ENCODE measurements at regions of chr1 and their contacts with region 1.

Region 1: DNA sequence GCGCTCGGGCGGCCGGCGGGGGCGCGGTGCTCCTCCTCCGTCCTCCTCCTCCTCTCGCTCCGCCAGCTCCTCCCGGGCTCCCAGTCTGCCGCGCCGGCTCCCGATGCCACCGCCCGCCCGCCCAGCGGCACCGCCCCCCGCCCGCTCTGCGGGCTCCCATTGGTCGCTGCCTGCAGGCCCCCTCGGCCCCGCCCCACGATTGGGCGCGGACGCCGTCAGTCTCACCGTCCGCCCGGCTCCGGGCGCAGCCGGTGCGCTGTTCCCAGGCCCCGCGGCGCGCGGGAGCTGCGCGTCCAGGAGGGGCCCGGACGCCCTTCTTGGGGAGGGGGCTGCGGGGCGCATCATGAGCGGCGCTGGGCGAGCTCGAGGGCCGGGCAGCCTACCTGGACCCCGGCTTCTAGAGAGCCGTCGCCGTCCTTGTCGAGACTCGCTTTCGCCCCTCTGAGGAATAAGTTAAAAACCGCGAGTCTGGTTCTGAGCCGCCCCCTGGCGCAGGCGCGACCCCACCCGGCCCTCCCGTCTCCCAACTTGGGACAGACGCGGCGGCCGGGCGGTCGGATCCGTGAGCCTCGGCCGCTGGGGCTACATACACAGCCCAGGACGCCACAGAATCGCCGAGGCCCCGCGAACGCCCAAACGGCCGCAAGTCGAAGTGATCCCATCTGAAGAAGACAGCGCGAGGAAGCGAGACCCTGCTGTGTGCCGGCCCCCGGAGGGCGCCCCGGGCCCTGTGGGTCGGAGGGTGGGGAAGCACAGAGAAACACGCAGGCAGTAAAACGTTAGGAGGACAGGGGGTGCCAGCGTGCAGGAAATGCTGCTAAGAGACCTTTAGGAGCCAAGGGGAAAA is at the start of gene SIPA1L2:
- DNase-seq: peak; percentile 87 to 95
- H3K4me3 ChIP-seq: peak within 1 kb of the TSS; percentile 68 to 89
- H3K27ac ChIP-seq: peak within 1 kb of the TSS; percentile 82 to 94
- H3K4me1 ChIP-seq: no peaks in the 10 kb centered on the region
- H3K27me3 ChIP-seq: no peaks in the 10 kb centered on the region
- CTCF ChIP-seq: peak; percentile 26 to 51 (median 44)
- POLR2A ChIP-seq: peak; percentile 63 to 76
- total RNA-seq, gene SIPA1L2: 2.4 to 25.1 (median 7.0) TPM

Region 2: DNA sequence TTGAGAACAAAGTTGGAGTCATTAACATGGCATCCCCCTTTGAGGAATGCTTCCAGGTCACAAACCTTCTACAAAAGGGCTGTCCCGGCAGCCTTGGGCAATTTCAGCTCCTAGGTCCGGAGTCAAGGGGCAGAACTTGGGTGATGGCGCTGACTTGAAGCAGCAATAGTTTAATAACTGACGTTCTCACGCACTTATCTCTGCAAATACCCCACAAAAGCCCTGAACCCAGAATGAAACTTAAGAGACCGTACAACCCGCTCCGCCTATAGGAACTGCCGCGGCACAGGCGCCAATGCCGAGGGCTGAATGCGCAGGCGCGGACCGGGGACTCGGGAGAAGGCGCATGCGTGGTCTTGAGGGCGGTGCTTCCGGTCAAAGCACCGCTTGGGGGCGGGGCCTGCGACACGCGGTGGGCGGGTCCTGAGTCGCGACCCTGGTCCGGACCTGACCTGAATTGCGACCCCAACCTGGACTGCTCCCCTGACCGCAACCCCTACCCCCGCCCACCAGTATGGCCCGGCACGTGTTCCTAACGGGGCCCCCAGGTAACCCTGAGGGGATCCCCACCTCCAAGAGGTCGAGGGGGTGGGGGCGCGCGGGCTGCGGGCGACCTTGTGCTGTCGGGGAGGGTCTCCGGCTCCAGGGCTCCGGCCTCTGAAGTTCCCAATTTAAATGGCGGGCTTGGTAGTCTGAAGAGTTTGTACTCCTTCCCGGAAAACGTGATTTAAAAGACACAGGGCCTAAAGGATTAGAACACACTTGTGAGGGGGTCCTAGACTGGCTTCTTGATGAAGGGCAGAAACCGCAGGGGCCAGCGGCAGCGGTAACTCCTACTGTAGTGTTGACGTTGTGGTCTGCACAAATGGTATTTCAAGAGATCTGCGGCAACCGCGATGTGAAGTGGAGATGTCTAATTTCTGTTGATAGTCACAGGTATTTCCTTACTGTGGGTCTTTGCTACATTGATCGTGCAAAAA is 320.2 kb after region 1 on chr1 and contains the start of gene NTPCR:
- intact Hi-C with region 1: loop called (anchors 10 kb)
- DNase-seq: peak; percentile 92 to 94
- H3K4me3 ChIP-seq: peak within 1 kb of the TSS; percentile 92 to 94
- H3K27ac ChIP-seq: peak within 1 kb of the TSS; percentile 84 to 90
- H3K4me1 ChIP-seq: no peaks in the 10 kb centered on the region
- H3K27me3 ChIP-seq: no peaks in the 10 kb centered on the region
- CTCF ChIP-seq: no peak
- POLR2A ChIP-seq: peak; percentile 23 to 47
- total RNA-seq, gene NTPCR: 7.4 to 30.1 (median 17.1) TPM

Measured in uterus (tissue), 4 donors.